MCF 10A (cell line): ENCODE measurements at regions of chr3 and their contacts with region 1.

Region 1: DNA sequence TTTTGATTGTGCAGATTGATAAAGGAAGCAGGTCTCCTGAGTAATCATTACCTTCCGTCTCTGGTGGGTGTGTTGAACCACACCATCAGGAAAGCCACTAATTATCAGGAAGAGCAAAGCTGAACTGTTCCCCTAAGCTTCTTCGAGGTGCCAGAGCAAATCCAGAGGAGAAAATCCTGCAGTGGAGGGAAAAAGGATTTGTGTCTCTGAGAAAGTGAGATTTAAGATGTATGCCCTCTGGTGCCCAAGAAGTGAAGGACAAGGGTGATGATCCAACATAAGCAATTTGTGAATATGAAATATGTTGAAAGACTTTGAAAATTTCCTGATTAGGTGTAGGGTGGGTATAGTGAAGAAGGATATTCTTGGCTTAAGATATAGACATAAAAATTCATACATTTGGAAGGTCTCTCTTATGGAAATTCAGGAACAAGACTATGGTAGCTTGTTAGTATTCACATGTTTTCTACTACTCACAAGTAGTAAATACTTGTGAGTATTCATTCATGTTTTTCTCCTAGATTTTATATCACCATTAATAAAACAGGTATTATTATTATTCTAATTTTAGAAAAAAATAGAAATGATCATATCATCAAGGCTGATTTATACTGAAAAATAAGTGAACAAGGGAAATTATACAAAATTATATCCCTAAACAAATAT is 34.8 kb downstream of the COMMD2 start:
- DNase-seq: peak; percentile 76
- H3K4me3 Mint-ChIP-seq: no peak overlapping the region
- H3K27ac Mint-ChIP-seq: no peak overlapping the region
- H3K4me1 Mint-ChIP-seq: no peaks in the 10 kb centered on the region
- H3K27me3 Mint-ChIP-seq: no peaks in the 10 kb centered on the region
- CTCF ChIP-seq: peak; percentile 66

Region 2: DNA sequence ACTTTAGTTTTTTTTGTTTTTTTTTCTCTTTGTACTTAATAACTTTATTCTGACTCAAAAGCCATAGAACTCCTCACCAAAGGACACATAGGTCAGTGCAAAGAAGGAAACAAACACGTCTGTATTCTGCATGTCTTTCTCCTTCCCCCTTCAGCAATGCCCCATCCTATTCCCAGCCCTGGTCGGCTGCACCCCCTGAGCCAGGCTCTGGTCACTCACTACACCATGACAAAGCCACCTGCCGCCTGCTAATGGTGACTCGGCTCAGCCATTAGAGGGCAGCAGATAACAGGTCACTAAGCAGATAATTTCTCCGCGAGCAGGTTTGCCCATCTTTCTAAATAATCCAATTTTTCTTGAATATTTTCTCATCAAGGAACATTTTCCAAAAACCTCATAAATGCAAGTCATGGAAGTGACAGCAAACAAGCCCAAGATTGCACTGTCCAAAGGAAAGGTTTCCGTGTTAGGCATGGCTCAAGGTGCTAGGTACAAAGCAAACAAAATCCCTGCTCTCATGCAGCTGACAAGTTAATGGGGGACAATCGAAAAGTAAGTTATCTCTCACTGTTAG is 205.2 kb before region 1 on chr3:
- CTCF ChIA-PET with region 1: interaction called, 45 read pairs
- POLR2A ChIA-PET with region 1: no interaction called
- intact Hi-C with region 1: loop called (anchors 1 kb)
- DNase-seq: peak; percentile 67
- H3K4me3 Mint-ChIP-seq: no peak overlapping the region
- H3K27ac Mint-ChIP-seq: no peak overlapping the region
- H3K4me1 Mint-ChIP-seq: peaks cover 19% of the 10 kb centered on the region
- H3K27me3 Mint-ChIP-seq: no peaks in the 10 kb centered on the region
- CTCF ChIP-seq: peak; percentile 61

Region 3: DNA sequence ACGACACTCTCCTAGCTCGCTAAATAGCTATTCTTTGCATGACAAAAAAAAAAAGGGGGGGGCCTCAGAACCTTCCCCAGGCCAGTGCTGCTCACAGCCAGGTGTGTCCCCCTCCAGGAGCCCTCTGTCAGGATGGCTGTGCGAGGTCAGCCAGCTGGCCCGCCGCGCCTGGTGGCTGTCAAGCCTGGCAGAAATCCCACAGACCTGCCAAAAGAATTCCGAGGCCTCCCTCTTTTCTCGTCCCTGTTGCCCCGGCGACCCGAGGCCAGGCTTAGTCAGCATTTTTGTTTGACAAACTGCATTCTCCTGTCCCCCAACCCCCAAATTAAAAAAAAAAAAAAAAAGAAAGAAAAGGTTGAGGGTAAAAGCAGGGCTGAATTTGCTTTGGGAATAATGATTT is 181.1 kb before region 1 on chr3:
- CTCF ChIA-PET with region 1: interaction called, 28 read pairs
- POLR2A ChIA-PET with region 1: interaction called, 4 read pairs
- intact Hi-C with region 1: no loop called
- DNase-seq: peak; percentile 27
- H3K4me3 Mint-ChIP-seq: peak overlapping the region; percentile 31
- H3K27ac Mint-ChIP-seq: peak overlapping the region; percentile 67
- H3K4me1 Mint-ChIP-seq: peaks cover 48% of the 10 kb centered on the region
- H3K27me3 Mint-ChIP-seq: no peaks in the 10 kb centered on the region
- CTCF ChIP-seq: no peak

Region 4: DNA sequence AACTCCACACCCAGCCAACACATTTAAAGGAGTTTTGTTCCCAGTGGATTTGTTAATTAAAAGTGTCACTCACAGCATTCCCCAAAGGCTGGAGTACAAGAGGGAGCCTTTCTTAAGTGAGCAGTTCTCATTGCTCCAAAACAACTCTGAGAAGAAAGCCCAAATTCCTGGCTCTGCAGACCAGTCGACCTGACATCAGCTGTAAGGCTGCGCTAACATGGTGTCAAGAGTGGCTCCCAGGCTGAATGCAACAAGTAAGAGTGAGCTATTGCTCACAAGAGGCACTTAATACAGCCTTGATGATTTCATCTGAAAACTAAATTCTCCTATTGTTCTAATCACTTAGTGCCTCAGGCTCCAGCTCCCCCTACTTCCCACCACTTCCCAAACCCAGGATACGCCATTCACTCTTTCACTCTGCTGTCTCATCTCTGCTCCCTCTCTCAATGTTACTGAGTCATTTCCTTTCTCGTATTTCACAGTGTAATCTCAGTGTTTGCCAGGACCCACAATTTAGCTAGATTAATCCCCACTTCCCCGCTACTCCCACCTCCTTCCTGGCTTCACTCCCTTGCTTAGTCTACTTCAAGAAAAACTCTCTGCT is 141.5 kb before region 1 on chr3:
- CTCF ChIA-PET with region 1: interaction called, 80 read pairs
- POLR2A ChIA-PET with region 1: no interaction called
- intact Hi-C with region 1: no loop called
- DNase-seq: peak; percentile 98
- H3K4me3 Mint-ChIP-seq: peak overlapping the region; percentile 55
- H3K27ac Mint-ChIP-seq: peak overlapping the region; percentile 77
- H3K4me1 Mint-ChIP-seq: peaks cover 66% of the 10 kb centered on the region
- H3K27me3 Mint-ChIP-seq: no peaks in the 10 kb centered on the region
- CTCF ChIP-seq: no peak

Region 5: DNA sequence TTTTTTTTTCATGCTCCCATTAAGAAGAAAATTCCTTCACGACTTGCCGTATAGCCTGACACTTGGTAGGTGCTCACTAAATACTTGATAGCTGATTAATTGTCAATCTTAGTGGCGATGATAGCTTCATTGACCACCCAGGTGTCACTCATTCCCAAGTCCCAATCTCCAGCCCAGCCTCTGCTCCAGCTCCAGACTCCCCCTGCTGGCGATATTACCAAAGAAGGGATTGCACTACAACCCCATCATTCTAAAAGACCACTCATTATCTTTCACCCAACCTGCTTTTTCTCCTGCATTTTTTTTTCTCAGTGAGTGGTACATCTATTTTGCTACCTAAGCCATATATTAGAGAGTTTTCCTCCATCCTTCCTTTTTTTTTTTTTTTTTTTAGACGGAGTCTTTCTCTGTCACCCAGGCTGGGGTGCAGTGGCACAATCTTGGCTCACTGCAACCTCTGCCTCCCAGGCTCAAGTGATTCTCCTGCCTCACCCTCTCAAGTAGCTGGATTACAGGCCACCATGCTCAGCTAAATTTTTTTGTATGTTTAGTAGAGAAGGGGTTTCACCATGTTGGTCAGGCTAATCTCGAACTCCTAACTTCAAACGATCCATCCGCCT is 54.2 kb after region 1 on chr3:
- CTCF ChIA-PET with region 1: interaction called, 14 read pairs
- POLR2A ChIA-PET with region 1: no interaction called
- intact Hi-C with region 1: no loop called
- DNase-seq: peak; percentile 56
- H3K4me3 Mint-ChIP-seq: no peak overlapping the region
- H3K27ac Mint-ChIP-seq: no peak overlapping the region
- H3K4me1 Mint-ChIP-seq: no peaks in the 10 kb centered on the region
- H3K27me3 Mint-ChIP-seq: no peaks in the 10 kb centered on the region
- CTCF ChIP-seq: peak; percentile 81